ENCODE measurements at regions of chr9 and their contacts with region 1.

Region 1: GRCh38 chr9:105500108-105500766 is 52.4 kb downstream of the FSD1L start:
- DNase-seq: no peak
- H3K4me3 Mint-ChIP-seq: no peak overlapping the region
- H3K27ac Mint-ChIP-seq: no peak overlapping the region
- H3K4me1 Mint-ChIP-seq: peaks cover 4% of the 10 kb centered on the region
- H3K27me3 Mint-ChIP-seq: no peaks in the 10 kb centered on the region

Region 2: DNA sequence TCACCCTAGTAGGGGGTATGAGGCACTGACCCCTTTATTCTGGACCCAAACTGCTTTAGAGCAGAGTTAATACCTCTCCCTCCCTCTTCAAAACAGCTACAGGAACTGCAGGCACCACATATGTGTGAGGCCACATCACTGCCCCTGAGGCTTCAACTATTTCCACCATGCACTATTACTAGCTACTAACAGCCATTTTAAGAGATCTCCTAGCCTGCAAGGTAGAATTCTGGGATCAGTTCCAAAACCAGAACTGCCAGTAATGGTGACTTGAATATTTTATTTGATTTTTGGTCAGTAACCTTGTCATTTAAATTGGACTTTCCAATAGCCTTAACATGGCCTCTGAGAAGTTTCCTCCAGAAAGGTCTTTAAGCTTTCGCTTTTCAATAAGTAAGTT is 107.7 kb before region 1 on chr9:
- CTCF ChIA-PET with region 1: no interaction called
- POLR2A ChIA-PET with region 1: interaction called, 12 read pairs
- DNase-seq: no peak
- H3K4me3 Mint-ChIP-seq: no peak overlapping the region
- H3K27ac Mint-ChIP-seq: no peak overlapping the region
- H3K4me1 Mint-ChIP-seq: peaks cover 9% of the 10 kb centered on the region
- H3K27me3 Mint-ChIP-seq: peaks cover 16% of the 10 kb centered on the region

Measured in activated CD4-positive, alpha-beta T cell treated with anti-CD3 and anti-CD28 coated beads, Interleukin-2, amount 10 ng/mL, durations not matched to agents 7 days and 5 days (primary cell).